Activated CD8-positive, alpha-beta memory T cell treated with anti-CD3 and anti-CD28 coated beads, Interleukin-2, amount 10 ng/mL, durations not matched to agents 7 days and 5 days (primary cell): ENCODE measurements at regions of chr1 and their contacts with region 1.

Region 1: GRCh38 chr1:159891275-159892157 is 8.4 kb downstream of the CFAP45 start:
- DNase-seq: peak; percentile 86
- ATAC-seq: peak; percentile 96
- H3K4me3 Mint-ChIP-seq: no peak overlapping the region
- H3K27ac Mint-ChIP-seq: no peak overlapping the region
- H3K4me1 Mint-ChIP-seq: peaks cover 18% of the 10 kb centered on the region
- H3K27me3 Mint-ChIP-seq: peaks cover 4% of the 10 kb centered on the region

Region 2: GRCh38 chr1:159705251-159705903 is 186.1 kb before region 1 on chr1:
- CTCF ChIA-PET with region 1: no interaction called
- DNase-seq: no peak
- ATAC-seq: no peak
- H3K4me3 Mint-ChIP-seq: no peak overlapping the region
- H3K27ac Mint-ChIP-seq: no peak overlapping the region
- H3K4me1 Mint-ChIP-seq: no peaks in the 10 kb centered on the region
- H3K27me3 Mint-ChIP-seq: no peaks in the 10 kb centered on the region

Region 3: GRCh38 chr1:159829273-159829634 is 62.3 kb before region 1 on chr1:
- CTCF ChIA-PET with region 1: interaction called, 16 read pairs
- DNase-seq: no peak
- ATAC-seq: no peak
- H3K4me3 Mint-ChIP-seq: no peak overlapping the region
- H3K27ac Mint-ChIP-seq: no peak overlapping the region
- H3K4me1 Mint-ChIP-seq: peaks cover 48% of the 10 kb centered on the region
- H3K27me3 Mint-ChIP-seq: peaks cover 29% of the 10 kb centered on the region

Region 4: GRCh38 chr1:159924981-159925712 is 33.6 kb after region 1 on chr1 and contains the start of gene TAGLN2:
- CTCF ChIA-PET with region 1: interaction called, 47 read pairs
- DNase-seq: peak; percentile 93
- ATAC-seq: peak; percentile 70
- H3K4me3 Mint-ChIP-seq: peak within 1 kb of the TSS; percentile 95
- H3K27ac Mint-ChIP-seq: peak within 1 kb of the TSS; percentile 98
- H3K4me1 Mint-ChIP-seq: peaks cover 41% of the 10 kb centered on the region
- H3K27me3 Mint-ChIP-seq: no peaks in the 10 kb centered on the region
- total RNA-seq, gene TAGLN2: 479 to 513 TPM

Region 5: GRCh38 chr1:159945483-159946241 is 54.1 kb after region 1 on chr1 and contains the start of gene IGSF9:
- CTCF ChIA-PET with region 1: interaction called, 39 read pairs
- DNase-seq: peak; percentile 76
- ATAC-seq: peak; percentile 90
- H3K4me3 Mint-ChIP-seq: peak within 1 kb of the TSS; percentile 3
- H3K27ac Mint-ChIP-seq: no peak within 1 kb of the TSS
- H3K4me1 Mint-ChIP-seq: peaks cover 6% of the 10 kb centered on the region
- H3K27me3 Mint-ChIP-seq: peaks cover 64% of the 10 kb centered on the region
- total RNA-seq, gene IGSF9: not detected